ENCODE measurements at regions of chr16 and their contacts with region 1.

Region 1: GRCh38 chr16:3094289-3095027 is 4.6 kb downstream of the ZSCAN10 start:
- DNase-seq: no peak
- H3K4me3 Mint-ChIP-seq: peak overlapping the region; percentile 1
- H3K27ac Mint-ChIP-seq: peak overlapping the region; percentile 67
- H3K4me1 Mint-ChIP-seq: peaks cover 25% of the 10 kb centered on the region
- H3K27me3 Mint-ChIP-seq: no peaks in the 10 kb centered on the region

Region 2: GRCh38 chr16:3123986-3124886 is 29.8 kb after region 1 on chr16:
- intact Hi-C with region 1: loop called (anchors 1 kb)
- DNase-seq: peak; percentile 96
- H3K4me3 Mint-ChIP-seq: peak overlapping the region; percentile 97
- H3K27ac Mint-ChIP-seq: peak overlapping the region; percentile 93
- H3K4me1 Mint-ChIP-seq: peaks cover 42% of the 10 kb centered on the region
- H3K27me3 Mint-ChIP-seq: peaks cover 3% of the 10 kb centered on the region

Region 3: GRCh38 chr16:3129137-3130131 is 35.0 kb after region 1 on chr16:
- intact Hi-C with region 1: loop called (anchors 1 kb)
- DNase-seq: peak; percentile 81
- H3K4me3 Mint-ChIP-seq: peak overlapping the region; percentile 88
- H3K27ac Mint-ChIP-seq: peak overlapping the region; percentile 81
- H3K4me1 Mint-ChIP-seq: peaks cover 51% of the 10 kb centered on the region
- H3K27me3 Mint-ChIP-seq: no peaks in the 10 kb centered on the region